Naive thymus-derived CD4-positive, alpha-beta T cell (primary cell): ENCODE measurements at regions of chr15 and their contacts with region 1.

Region 1: DNA sequence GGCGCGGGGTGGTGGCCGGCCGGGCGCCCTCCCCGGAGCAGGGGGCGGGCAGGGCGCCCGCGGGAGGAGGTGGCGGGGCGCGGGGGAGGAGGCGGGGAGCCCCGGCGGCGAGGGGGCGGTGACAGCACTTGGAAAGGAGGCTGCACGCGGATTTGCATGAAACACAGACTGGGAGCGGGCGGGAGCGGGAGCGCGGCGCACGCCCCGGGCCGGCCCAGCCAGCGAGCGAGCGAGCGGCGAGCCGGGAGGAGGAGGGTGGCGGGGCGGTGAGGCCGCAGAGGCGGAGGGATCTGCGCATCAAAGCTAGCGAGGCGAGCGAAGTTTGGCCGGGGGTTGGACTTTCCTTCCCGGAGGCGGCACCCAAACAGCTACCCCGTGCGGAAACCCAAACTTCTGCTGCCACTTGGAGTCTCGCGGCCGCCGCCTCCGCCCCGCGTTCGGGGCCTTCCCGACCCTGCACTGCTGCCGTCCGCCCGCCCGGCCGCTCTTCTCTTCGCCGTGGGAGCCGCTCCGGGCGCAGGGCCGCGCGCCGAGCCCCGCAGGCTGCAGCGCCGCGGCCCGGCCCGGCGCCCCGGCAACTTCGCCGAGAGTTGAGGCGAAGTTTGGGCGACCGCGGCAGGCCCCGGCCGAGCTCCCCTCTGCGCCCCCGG is at the start of gene SMAD3:
- DNase-seq: peak; percentile 28 to 82 (median 58)
- ATAC-seq: peak; percentile 78
- H3K4me3 ChIP-seq: peak within 1 kb of the TSS; percentile 79
- H3K4me3 Mint-ChIP-seq: peak within 1 kb of the TSS; percentile 90 to 100 (median 94)
- H3K27ac ChIP-seq: peak within 1 kb of the TSS; percentile 68
- H3K27ac Mint-ChIP-seq: peak within 1 kb of the TSS; percentile 53 to 96 (median 91)
- H3K4me1 ChIP-seq: peaks cover 20 to 51% of the 10 kb centered on the region in 2 donors
- H3K4me1 Mint-ChIP-seq: peaks cover 37 to 67% (median 56%) of the 10 kb centered on the region in 7 donors
- H3K27me3 ChIP-seq: no peaks in the 10 kb centered on the region
- H3K27me3 Mint-ChIP-seq: peaks cover 0 to 14% (median 0%) of the 10 kb centered on the region in 5 donors
- total RNA-seq, gene SMAD3: 27.4 to 142 (median 113) TPM

Region 2: DNA sequence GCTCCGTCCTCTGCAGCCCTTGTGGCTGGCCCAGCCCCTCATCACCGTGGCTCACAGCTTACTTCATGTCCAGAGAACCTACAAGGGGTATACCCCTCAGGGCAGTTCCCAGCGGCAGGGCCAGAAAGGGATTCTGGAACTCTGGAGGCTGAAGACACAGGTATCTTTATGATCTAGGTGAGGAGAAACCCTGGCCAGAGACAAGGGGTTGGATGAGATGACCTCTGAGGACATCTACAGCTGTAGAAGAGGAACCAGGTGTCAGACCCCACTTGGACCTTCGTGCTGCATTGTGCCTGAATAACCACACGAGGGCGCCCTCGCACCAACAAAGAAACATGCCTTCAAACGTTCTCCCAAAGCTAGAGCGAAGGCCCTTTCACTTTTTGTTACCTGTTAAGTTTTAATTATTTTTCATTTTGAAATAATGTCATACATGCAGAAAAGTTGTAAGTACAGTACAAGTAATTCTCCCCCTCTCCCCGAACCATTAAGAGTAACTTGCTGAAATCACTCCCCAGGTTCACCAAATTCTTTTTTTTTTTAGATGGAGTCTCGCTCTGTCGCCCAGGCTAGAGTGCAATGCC is 118.9 kb before region 1 on chr15:
- CTCF ChIA-PET with region 1: no interaction called
- POLR2A ChIA-PET with region 1: no interaction called
- intact Hi-C with region 1: loop called (anchors 5 kb)
- DNase-seq: peak; percentile 50 to 78 (median 68)
- ATAC-seq: peak; percentile 86
- H3K4me3 ChIP-seq: no peak overlapping the region
- H3K4me3 Mint-ChIP-seq: peak overlapping the region in 2 of 10 donors; percentile 17
- H3K27ac ChIP-seq: no peak overlapping the region
- H3K27ac Mint-ChIP-seq: no peak overlapping the region
- H3K4me1 ChIP-seq: no peaks in the 10 kb centered on the region
- H3K4me1 Mint-ChIP-seq: peaks cover 0 to 26% (median 4%) of the 10 kb centered on the region in 7 donors
- H3K27me3 ChIP-seq: no peaks in the 10 kb centered on the region
- H3K27me3 Mint-ChIP-seq: peaks cover 0 to 9% (median 0%) of the 10 kb centered on the region in 5 donors

Region 3: GRCh38 chr15:67039384-67040075 is 26.0 kb before region 1 on chr15:
- CTCF ChIA-PET with region 1: no interaction called
- POLR2A ChIA-PET with region 1: interaction called, 3 read pairs
- intact Hi-C with region 1: loop called (anchors 2 to 5 kb)
- DNase-seq: no peak
- ATAC-seq: no peak
- H3K4me3 ChIP-seq: no peak overlapping the region
- H3K4me3 Mint-ChIP-seq: peak overlapping the region in 9 of 10 donors; percentile 10 to 72 (median 57)
- H3K27ac ChIP-seq: no peak overlapping the region
- H3K27ac Mint-ChIP-seq: peak overlapping the region in 8 of 9 donors; percentile 1 to 80 (median 20)
- H3K4me1 ChIP-seq: peaks cover 4 to 27% of the 10 kb centered on the region in 2 donors
- H3K4me1 Mint-ChIP-seq: peaks cover 21 to 40% (median 25%) of the 10 kb centered on the region in 7 donors
- H3K27me3 ChIP-seq: no peaks in the 10 kb centered on the region
- H3K27me3 Mint-ChIP-seq: peaks cover 0 to 6% (median 0%) of the 10 kb centered on the region in 5 donors

Region 4: DNA sequence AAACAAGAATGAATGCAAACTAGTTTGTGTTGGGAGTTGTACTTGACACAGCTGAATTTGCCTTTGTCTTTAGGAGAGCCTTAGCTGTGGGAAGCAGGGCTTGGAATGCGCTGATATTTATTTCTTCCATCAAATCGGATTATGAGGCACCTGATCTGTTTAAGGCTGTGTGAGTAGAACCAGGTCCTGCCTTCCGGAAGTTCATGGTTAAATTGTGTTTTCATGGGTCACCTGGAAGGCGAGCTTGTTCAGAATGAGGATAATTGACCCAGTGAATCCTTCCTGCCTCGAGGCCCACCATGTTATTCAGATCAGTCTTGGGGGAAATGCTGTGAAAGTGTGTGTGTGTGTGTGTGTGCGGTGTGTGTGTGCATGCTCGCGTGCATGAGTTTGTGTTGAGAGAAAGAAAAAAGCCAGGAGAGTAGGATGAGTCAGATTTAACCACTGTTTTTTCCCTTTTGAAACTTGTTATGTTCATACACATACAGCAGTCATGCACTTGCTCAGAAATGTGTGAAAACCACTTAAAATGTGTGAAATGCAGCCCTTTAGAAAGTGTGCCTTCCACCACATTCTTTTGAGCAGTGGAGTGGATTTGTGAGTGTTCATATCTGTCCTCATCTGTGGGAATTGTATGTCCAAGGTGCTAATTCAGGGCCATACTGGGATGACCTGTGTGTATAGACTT is 36.5 kb after region 1 on chr15:
- CTCF ChIA-PET with region 1: interaction called, 5 read pairs
- POLR2A ChIA-PET with region 1: interaction called, 50 read pairs
- intact Hi-C with region 1: loop called in 1 of 2 experiments (anchors 1 kb)
- DNase-seq: peak in 1 of 9 donors; percentile 51
- ATAC-seq: peak; percentile 62
- H3K4me3 ChIP-seq: peak overlapping the region; percentile 15
- H3K4me3 Mint-ChIP-seq: no peak overlapping the region
- H3K27ac ChIP-seq: peak overlapping the region; percentile 61
- H3K27ac Mint-ChIP-seq: no peak overlapping the region
- H3K4me1 ChIP-seq: peaks cover 92 to 95% of the 10 kb centered on the region in 2 donors
- H3K4me1 Mint-ChIP-seq: peaks cover 26 to 64% (median 27%) of the 10 kb centered on the region in 7 donors
- H3K27me3 ChIP-seq: no peaks in the 10 kb centered on the region
- H3K27me3 Mint-ChIP-seq: no peaks in the 10 kb centered on the region

Region 5: DNA sequence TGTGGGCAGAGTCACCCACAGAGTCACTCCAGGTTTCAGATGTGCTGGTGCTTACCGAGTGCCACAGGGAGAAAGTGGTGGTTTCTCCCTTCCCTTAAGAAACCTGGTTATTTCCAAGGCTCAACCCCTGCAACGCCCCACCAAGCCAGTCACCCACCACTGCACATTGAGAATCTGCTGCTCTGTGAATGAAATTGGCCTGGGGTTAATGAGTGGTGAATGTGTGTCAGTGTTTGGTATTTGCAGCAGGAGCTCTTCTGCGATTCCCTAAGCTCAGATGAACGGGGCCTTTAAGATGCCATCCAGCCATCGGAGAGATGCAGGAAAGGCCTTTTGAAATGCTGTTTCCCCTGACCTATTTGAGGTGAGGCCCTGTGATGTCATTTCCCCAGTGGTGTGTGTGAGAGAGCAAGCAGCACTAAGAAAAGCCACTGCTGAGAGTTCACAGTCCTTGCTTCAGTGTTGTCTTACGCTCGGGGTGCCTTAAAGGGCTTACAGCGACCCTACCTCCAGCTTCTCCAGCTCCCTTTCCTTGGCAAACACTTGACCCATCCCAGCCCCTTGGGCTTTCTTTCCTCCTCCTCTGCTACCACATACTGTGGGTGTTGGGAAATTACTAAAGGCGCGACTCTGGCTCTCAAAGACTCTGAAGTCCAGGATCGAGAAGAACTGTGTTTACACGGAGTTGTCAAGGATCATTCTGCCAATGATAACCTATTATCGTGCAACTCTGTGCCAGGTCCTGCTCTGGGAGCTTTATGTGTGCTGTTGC is 68.7 kb after region 1 on chr15:
- CTCF ChIA-PET with region 1: no interaction called
- POLR2A ChIA-PET with region 1: no interaction called
- intact Hi-C with region 1: loop called (anchors 1 to 2 kb)
- DNase-seq: peak; percentile 29 to 82 (median 78)
- ATAC-seq: peak; percentile 97
- H3K4me3 ChIP-seq: peak overlapping the region; percentile 41
- H3K4me3 Mint-ChIP-seq: peak overlapping the region; percentile 77 to 95 (median 85)
- H3K27ac ChIP-seq: peak overlapping the region; percentile 91
- H3K27ac Mint-ChIP-seq: peak overlapping the region; percentile 96 to 100 (median 98)
- H3K4me1 ChIP-seq: peaks cover 46 to 72% of the 10 kb centered on the region in 2 donors
- H3K4me1 Mint-ChIP-seq: peaks cover 41 to 93% (median 88%) of the 10 kb centered on the region in 7 donors
- H3K27me3 ChIP-seq: no peaks in the 10 kb centered on the region
- H3K27me3 Mint-ChIP-seq: no peaks in the 10 kb centered on the region

Region 6: DNA sequence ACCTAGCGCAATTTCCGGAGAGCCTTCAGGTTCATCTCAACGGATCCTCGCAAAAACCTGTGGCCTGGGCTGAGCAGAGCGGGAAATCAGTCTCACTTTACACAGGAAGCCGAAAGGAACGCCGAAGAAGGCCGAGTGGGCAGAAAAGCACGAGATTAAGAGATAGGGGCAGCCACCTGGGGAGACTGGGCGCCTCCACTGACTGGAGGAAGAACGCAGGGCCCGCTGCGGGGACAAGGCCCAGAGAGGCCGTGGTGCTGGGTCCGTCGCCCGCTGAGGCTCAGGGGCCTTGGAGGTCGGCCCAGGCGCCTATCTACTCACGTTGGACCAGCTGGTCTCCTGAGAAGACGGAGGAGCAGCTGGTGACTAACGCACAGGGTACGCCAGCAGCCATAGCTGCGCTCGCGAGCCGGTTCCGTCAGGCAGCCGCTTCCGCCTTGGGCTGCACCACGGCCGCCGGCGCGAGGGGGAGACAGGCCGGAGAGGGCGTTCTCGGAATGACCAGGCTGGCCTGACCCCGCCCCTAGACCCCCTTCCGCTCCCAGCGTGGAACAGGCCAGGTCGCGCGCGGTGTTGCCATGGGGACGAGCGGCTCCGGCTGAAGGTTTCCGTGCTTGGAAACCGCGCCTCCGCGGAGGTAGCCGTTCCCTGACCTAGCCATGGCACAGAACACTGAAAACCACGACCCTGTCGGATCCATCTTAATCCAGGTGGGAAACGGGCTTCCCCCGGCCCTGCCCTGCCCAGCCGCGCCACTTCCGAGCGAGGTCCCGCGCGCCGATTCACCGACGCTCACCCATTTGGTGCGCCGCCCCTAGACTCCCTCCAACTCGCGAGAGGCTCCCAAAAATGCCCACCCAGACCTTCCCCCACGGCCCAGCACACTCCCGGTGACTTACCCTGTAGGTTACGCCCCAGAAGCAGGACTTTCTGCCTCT is 188.9 kb after region 1 on chr15 and contains the starts of genes AAGAB and IQCH:
- CTCF ChIA-PET with region 1: no interaction called
- POLR2A ChIA-PET with region 1: interaction called, 3 read pairs
- intact Hi-C with region 1: loop called (anchors 1 kb)
- DNase-seq: peak; percentile 81 to 98 (median 91)
- ATAC-seq: peak; percentile 99
- H3K4me3 ChIP-seq: peak within 1 kb of the TSS; percentile 69
- H3K4me3 Mint-ChIP-seq: peak within 1 kb of the TSS; percentile 87 to 100 (median 96)
- H3K27ac ChIP-seq: peak within 1 kb of the TSS; percentile 84
- H3K27ac Mint-ChIP-seq: peak within 1 kb of the TSS; percentile 86 to 99 (median 95)
- H3K4me1 ChIP-seq: peaks cover 4 to 13% of the 10 kb centered on the region in 2 donors
- H3K4me1 Mint-ChIP-seq: peaks cover 25 to 52% (median 41%) of the 10 kb centered on the region in 7 donors
- H3K27me3 ChIP-seq: no peaks in the 10 kb centered on the region
- H3K27me3 Mint-ChIP-seq: peaks cover 0 to 25% (median 0%) of the 10 kb centered on the region in 5 donors
- total RNA-seq, gene AAGAB: 19.5 to 44.9 (median 22.3) TPM
- total RNA-seq, gene IQCH: 0.22 to 1.9 (median 0.84) TPM

Region 7: DNA sequence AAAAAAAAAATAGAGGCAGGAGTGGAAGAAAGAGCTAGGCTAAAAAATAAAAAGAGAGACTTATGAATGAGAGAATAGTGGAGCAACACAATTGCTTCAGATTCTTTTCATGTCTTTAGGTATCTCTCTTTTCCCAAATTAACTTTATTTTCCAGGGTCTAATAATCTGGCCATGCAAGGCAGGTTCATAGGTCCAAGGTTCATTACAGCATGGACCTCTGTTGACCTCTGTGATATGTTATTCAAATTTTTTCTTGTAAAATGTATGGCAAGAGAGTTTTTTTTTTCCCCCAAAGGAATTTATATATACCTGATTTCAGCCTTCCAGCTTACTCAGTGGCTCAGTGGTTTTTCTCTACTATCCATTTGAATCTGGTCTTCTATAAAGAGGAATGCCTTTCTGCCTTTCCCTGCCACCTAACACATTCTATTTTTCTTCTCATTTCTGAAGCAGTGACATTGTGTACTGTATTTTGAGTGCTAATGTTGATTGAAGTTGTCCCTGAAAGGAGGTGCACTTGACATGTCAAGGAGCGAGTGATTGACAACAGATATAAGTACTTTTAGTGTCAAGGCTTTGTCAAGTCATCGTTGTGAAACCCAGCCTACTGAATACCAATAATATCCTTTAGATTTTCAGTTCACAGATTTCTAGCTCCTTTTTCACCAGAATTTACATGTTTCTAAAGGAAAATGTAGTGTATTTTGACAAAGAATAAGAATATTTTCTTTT is 595.5 kb after region 1 on chr15:
- CTCF ChIA-PET with region 1: no interaction called
- POLR2A ChIA-PET with region 1: no interaction called
- intact Hi-C with region 1: no loop called
- DNase-seq: no peak
- ATAC-seq: no peak
- H3K4me3 ChIP-seq: no peak overlapping the region
- H3K4me3 Mint-ChIP-seq: no peak overlapping the region
- H3K27ac ChIP-seq: no peak overlapping the region
- H3K27ac Mint-ChIP-seq: no peak overlapping the region
- H3K4me1 ChIP-seq: no peaks in the 10 kb centered on the region
- H3K4me1 Mint-ChIP-seq: no peaks in the 10 kb centered on the region
- H3K27me3 ChIP-seq: no peaks in the 10 kb centered on the region
- H3K27me3 Mint-ChIP-seq: no peaks in the 10 kb centered on the region